Colonic mucosa (tissue), 4 donors: ENCODE measurements at regions of chr16 and their contacts with region 1.

Region 1: DNA sequence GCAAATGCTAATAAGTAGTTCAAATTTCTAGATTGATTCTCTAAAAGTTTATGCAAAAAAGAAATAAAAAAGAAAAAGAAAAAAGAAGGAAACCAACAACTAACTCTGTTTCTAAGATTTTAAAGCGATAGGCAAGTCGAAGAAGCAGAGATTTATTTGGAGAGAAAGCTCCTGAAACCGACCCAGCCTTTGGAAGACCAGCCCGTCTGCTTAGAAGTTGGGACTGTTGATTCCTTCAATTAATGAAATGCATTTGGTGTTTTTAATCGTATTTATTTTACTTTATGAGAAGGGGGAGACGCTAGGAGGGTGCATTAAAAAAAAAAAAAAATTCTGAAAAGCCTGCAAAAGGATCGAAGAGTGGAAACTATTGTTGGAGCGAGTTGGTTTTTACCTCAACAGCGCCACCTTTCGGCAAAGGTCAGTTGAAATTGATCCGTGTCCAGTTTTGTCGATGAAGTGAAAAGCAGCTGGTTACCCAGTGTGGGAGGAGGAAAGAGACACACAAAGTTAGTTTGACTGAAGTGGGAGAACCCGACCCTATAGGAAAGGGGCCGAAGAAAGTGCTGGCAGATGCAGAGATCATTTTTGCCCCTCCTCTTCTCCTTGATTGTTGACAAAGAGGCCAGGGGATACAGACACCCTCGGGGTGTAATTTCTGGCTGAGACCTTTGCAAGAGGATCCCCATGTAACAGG is 1.5 kb upstream of the MAF start:
- DNase-seq: peak; percentile 91
- H3K4me3 ChIP-seq: peak overlapping the region; percentile 66
- H3K27ac ChIP-seq: peak overlapping the region; percentile 79
- H3K4me1 ChIP-seq: no peaks in the 10 kb centered on the region
- H3K27me3 ChIP-seq: peaks cover 4% of the 10 kb centered on the region
- CTCF ChIP-seq: peak; percentile 72

Region 2: DNA sequence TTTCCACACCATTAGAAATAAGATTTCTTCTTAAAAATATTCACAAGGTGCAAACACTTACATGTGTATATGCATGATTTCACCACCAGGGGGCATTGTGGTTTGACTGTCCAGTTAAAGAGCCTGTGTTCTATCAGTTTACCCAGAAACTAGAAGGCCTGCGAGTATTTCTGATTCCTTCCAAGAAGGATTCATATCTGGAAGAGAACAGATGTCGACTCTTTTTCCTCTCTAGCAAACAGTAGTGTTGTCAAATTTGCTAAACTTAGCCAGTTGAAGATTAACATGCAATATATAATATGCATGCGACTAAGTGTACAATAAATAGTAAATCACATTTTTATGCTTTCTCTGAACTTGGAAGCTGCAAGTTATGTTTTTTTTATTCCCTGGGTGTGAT is 1098.5 kb before region 1 on chr16:
- intact Hi-C with region 1: loop called (anchors 10 kb)
- DNase-seq: peak; percentile 69
- H3K4me3 ChIP-seq: no peak overlapping the region
- H3K27ac ChIP-seq: no peak overlapping the region
- H3K4me1 ChIP-seq: no peaks in the 10 kb centered on the region
- H3K27me3 ChIP-seq: no peaks in the 10 kb centered on the region
- CTCF ChIP-seq: peak; percentile 82

Region 3: GRCh38 chr16:78925083-78925767 is 676.9 kb before region 1 on chr16:
- intact Hi-C with region 1: loop called (anchors 10 kb)
- DNase-seq: peak; percentile 32
- H3K4me3 ChIP-seq: no peak overlapping the region
- H3K27ac ChIP-seq: no peak overlapping the region
- H3K4me1 ChIP-seq: no peaks in the 10 kb centered on the region
- H3K27me3 ChIP-seq: no peaks in the 10 kb centered on the region
- CTCF ChIP-seq: peak; percentile 39

Region 4: DNA sequence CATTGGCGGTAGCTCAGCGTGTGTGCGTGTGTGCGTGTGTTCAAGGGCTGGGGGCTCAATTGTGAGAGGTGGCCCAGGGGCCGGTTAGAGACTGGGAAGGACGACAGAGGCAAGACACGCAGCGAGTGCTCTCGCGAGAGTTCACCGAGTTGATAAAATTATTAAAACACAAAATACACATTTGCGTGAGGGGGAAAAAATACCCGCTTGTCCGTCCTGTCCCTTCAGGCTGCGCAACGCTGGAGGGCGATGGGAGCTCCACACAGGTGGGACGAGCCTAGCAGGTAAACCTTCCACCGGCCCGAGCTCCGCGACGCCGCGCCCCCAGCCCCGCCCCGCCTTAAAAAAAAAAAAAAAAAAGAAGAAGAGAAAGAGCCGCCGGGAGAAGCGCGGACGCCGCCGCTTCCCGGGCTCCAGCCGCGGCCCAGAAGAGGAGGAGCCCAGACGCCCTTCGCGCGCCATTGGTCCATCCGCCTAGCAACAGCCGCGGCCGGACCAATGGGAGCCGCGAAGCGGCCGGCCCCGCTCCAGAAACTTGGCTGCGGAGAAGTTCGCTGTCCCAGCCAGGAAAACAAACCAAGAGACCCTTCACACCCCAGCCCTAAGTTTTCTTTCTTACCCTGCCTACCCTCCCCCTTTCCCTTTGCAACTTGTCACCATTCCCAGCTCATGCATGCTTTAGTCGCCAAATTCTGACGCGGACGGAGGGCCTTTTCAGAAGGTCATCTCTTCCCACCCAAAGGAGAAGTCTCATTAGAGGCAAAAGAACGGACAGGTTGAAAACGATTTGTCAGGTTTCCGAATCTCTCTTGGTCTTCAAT is 168.4 kb after region 1 on chr16:
- intact Hi-C with region 1: loop called (anchors 10 kb)
- DNase-seq: peak; percentile 89
- H3K4me3 ChIP-seq: peak overlapping the region; percentile 29
- H3K27ac ChIP-seq: peak overlapping the region; percentile 13
- H3K4me1 ChIP-seq: peaks cover 12% of the 10 kb centered on the region
- H3K27me3 ChIP-seq: no peaks in the 10 kb centered on the region
- CTCF ChIP-seq: no peak